Calu3 (cell line): ENCODE measurements at regions of chr6 and their contacts with region 1.

Region 1: DNA sequence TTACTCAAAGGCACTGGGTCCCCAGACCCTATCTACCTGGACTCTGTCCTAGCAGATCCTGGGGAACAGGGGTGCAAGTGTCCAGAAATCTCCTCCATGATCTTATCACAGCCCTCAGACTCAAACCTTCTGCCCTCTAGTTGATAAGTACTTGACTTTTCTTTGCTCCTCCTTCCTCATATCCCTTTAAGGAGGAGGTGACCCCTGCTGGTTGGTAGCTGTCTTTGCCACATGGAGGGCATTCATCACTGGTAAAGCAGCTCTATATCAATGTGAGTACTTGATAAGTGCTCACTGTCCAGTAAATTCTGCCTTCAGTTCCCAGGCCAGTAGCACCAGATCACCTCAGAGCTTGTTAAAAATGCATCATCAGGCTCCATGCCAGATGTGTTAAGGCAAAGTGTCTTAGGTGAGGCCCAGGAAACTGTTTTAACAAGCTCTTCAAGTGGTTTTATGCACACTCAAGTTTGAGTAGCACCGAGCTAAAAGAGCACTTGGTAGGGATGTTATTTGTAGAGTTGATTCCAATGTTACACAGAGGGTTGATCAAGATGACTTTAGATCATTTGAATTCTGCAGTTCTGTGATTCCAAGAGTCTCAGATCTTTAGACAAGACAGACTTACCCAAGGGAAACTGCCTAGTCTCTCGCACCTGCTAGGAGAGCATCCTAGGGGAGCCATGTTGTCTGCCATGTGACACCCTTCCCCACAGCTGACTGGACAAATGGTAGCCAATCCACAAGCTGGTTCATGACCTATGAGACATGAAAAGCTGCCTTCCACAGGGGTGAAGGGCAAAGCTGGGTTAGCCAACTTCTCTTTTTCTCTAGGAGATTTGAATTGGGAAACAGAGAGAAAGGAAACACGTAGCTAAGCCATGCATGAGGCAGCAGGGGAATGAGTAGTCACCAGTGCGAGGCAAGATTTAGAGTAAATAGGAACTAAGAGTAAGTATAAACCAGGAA is 18.6 kb downstream of the TREML2 start:
- DNase-seq: peak; percentile 62
- H3K4me3 Mint-ChIP-seq: no peak overlapping the region
- H3K27ac Mint-ChIP-seq: no peak overlapping the region
- H3K4me1 Mint-ChIP-seq: no peaks in the 10 kb centered on the region
- H3K27me3 Mint-ChIP-seq: peaks cover 41% of the 10 kb centered on the region
- CTCF ChIP-seq: peak; percentile 51

Region 2: GRCh38 chr6:41092421-41093140 is 89.8 kb before region 1 on chr6:
- CTCF ChIA-PET with region 1: interaction called, 7 read pairs
- intact Hi-C with region 1: loop called (anchors 1 kb)
- DNase-seq: no peak
- H3K4me3 Mint-ChIP-seq: no peak overlapping the region
- H3K27ac Mint-ChIP-seq: no peak overlapping the region
- H3K4me1 Mint-ChIP-seq: no peaks in the 10 kb centered on the region
- H3K27me3 Mint-ChIP-seq: no peaks in the 10 kb centered on the region
- CTCF ChIP-seq: peak; percentile 27

Region 3: DNA sequence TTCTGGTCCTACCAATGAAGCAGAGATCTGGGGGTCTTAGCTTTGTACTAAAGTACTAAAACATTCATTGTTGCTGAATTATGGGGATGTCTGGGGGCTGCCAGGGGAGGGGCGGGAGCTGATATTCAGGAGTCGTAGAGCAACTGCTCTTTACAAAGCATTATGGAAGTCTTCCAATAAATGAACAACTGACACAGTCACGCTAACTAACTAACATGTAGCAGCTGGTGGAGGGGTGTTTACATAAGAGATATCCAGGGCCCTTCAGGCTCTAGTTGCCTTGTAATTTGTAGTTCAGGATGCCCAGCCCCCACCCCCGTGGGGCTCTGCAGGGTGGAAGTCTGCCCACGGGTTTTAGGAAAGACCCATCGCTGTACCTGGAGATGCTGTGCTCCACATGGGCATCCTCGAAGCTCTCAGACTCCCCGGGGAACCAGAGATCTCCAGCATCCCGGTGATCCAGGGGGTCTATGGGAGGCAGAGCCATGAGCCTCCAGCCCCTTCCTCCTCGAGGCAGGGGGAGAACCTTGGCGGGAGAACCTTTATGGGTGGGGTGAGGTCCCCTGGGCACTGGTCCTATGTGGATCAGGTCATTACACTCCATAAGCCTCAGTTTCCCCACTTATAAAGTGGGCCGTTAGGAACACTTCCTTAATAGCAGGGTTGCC is 22.8 kb before region 1 on chr6:
- CTCF ChIA-PET with region 1: no interaction called
- intact Hi-C with region 1: no loop called
- DNase-seq: no peak
- H3K4me3 Mint-ChIP-seq: no peak overlapping the region
- H3K27ac Mint-ChIP-seq: no peak overlapping the region
- H3K4me1 Mint-ChIP-seq: no peaks in the 10 kb centered on the region
- H3K27me3 Mint-ChIP-seq: peaks cover 82% of the 10 kb centered on the region
- CTCF ChIP-seq: no peak